ENCODE measurements at regions of chr14 and their contacts with region 1.

Region 1: GRCh38 chr14:24299255-24300195 is at the starts of genes DHRS1 and NOP9:
- DNase-seq: peak; percentile 90
- H3K4me3 ChIP-seq: peak within 1 kb of the TSS; percentile 79 to 85 (median 82)
- H3K27ac ChIP-seq: peak within 1 kb of the TSS; percentile 74
- H3K4me1 ChIP-seq: peaks cover 22% of the 10 kb centered on the region
- H3K27me3 ChIP-seq: no peaks in the 10 kb centered on the region
- CTCF ChIP-seq: no peak
- POLR2A ChIP-seq: peak; percentile 76
- total RNA-seq, gene DHRS1: 18.0 and 20.0 TPM in 2 replicates
- total RNA-seq, gene NOP9: 30.9 and 31.0 TPM in 2 replicates

Region 2: GRCh38 chr14:24146978-24147760 is 152.4 kb before region 1 on chr14 and contains the start of gene RNF31:
- CTCF ChIA-PET with region 1: interaction called, 8 read pairs
- POLR2A ChIA-PET with region 1: no interaction called
- dilution Hi-C with region 1: no loop called
- intact Hi-C with region 1: loop called (anchors 5 kb)
- DNase-seq: peak; percentile 97
- H3K4me3 ChIP-seq: peak within 1 kb of the TSS; percentile 59 to 86 (median 79)
- H3K27ac ChIP-seq: peak within 1 kb of the TSS; percentile 52
- H3K4me1 ChIP-seq: peaks cover 17% of the 10 kb centered on the region
- H3K27me3 ChIP-seq: no peaks in the 10 kb centered on the region
- CTCF ChIP-seq: no peak
- POLR2A ChIP-seq: peak; percentile 75
- total RNA-seq, gene RNF31: 66.5 and 69.7 TPM in 2 replicates

Region 3: GRCh38 chr14:24195191-24196070 is 104.1 kb before region 1 on chr14 and contains the start of gene TM9SF1:
- CTCF ChIA-PET with region 1: interaction called, 19 read pairs
- POLR2A ChIA-PET with region 1: no interaction called
- dilution Hi-C with region 1: no loop called
- intact Hi-C with region 1: no loop called
- DNase-seq: peak; percentile 93
- H3K4me3 ChIP-seq: peak within 1 kb of the TSS; percentile 36 to 82 (median 69)
- H3K27ac ChIP-seq: peak within 1 kb of the TSS; percentile 93
- H3K4me1 ChIP-seq: peaks cover 16% of the 10 kb centered on the region
- H3K27me3 ChIP-seq: no peaks in the 10 kb centered on the region
- CTCF ChIP-seq: no peak
- POLR2A ChIP-seq: no peak
- total RNA-seq, gene TM9SF1: 58.5 and 60.7 TPM in 2 replicates

Region 4: GRCh38 chr14:24241829-24242443 is 57.6 kb before region 1 on chr14:
- CTCF ChIA-PET with region 1: interaction called, 199 read pairs
- POLR2A ChIA-PET with region 1: interaction called, 7 read pairs
- dilution Hi-C with region 1: no loop called
- intact Hi-C with region 1: loop called (anchors 1 kb)
- DNase-seq: no peak
- H3K4me3 ChIP-seq: peak overlapping the region; percentile 31 to 67 (median 57)
- H3K27ac ChIP-seq: peak overlapping the region; percentile 98
- H3K4me1 ChIP-seq: peaks cover 30% of the 10 kb centered on the region
- H3K27me3 ChIP-seq: no peaks in the 10 kb centered on the region
- CTCF ChIP-seq: peak; percentile 16 to 75
- POLR2A ChIP-seq: no peak

Region 5: DNA sequence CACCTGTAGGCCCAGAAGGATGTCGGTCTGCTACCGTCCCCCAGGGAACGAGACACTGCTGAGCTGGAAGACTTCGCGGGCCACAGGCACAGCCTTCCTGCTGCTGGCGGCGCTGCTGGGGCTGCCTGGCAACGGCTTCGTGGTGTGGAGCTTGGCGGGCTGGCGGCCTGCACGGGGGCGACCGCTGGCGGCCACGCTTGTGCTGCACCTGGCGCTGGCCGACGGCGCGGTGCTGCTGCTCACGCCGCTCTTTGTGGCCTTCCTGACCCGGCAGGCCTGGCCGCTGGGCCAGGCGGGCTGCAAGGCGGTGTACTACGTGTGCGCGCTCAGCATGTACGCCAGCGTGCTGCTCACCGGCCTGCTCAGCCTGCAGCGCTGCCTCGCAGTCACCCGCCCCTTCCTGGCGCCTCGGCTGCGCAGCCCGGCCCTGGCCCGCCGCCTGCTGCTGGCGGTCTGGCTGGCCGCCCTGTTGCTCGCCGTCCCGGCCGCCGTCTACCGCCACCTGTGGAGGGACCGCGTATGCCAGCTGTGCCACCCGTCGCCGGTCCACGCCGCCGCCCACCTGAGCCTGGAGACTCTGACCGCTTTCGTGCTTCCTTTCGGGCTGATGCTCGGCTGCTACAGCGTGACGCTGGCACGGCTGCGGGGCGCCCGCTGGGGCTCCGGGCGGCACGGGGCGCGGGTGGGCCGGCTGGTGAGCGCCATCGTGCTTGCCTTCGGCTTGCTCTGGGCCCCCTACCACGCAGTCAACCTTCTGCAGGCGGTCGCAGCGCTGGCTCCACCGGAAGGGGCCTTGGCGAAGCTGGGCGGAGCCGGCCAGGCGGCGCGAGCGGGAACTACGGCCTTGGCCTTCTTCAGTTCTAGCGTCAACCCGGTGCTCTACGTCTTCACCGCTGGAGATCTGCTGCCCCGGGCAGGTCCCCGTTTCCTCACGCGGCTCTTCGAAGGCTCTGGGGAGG is 11.4 kb after region 1 on chr14 and contains the start of gene LTB4R:
- CTCF ChIA-PET with region 1: interaction called, 122 read pairs
- POLR2A ChIA-PET with region 1: no interaction called
- dilution Hi-C with region 1: no loop called
- intact Hi-C with region 1: no loop called
- DNase-seq: peak; percentile 88
- H3K4me3 ChIP-seq: peak within 1 kb of the TSS in 1 of 3 experiments; percentile 19
- H3K27ac ChIP-seq: peak within 1 kb of the TSS; percentile 91
- H3K4me1 ChIP-seq: peaks cover 60% of the 10 kb centered on the region
- H3K27me3 ChIP-seq: no peaks in the 10 kb centered on the region
- CTCF ChIP-seq: peak; percentile 20 to 53
- POLR2A ChIP-seq: peak; percentile 34
- total RNA-seq, gene LTB4R: 6.2 and 10.5 TPM in 2 replicates